ENCODE measurements at regions of chr2 and their contacts with region 1.

Region 1: GRCh38 chr2:10316336-10316735 is 13.6 kb downstream of the HPCAL1 start:
- DNase-seq: no peak
- H3K4me3 ChIP-seq: no peak overlapping the region
- H3K4me3 Mint-ChIP-seq: no peak overlapping the region
- H3K27ac ChIP-seq: no peak overlapping the region
- H3K27ac Mint-ChIP-seq: peak overlapping the region in 4 of 7 donors; percentile 31 to 76 (median 60)
- H3K4me1 ChIP-seq: no peaks in the 10 kb centered on the region
- H3K4me1 Mint-ChIP-seq: peaks cover 17% of the 10 kb centered on the region
- H3K27me3 ChIP-seq: no peaks in the 10 kb centered on the region
- H3K27me3 Mint-ChIP-seq: peaks cover 0 to 2% (median 0%) of the 10 kb centered on the region in 3 donors
- CTCF ChIP-seq: no peak

Region 2: GRCh38 chr2:10278029-10278762 is 38.1 kb before region 1 on chr2:
- intact Hi-C with region 1: no loop called
- DNase-seq: peak; percentile 95 to 97 (median 95)
- H3K4me3 ChIP-seq: peak overlapping the region in 1 of 3 experiments; percentile 29
- H3K4me3 Mint-ChIP-seq: peak overlapping the region; percentile 42 to 76
- H3K27ac ChIP-seq: peak overlapping the region; percentile 91 to 95
- H3K27ac Mint-ChIP-seq: peak overlapping the region; percentile 93 to 97 (median 96)
- H3K4me1 ChIP-seq: peaks cover 43 to 46% of the 10 kb centered on the region in 2 donors
- H3K4me1 Mint-ChIP-seq: peaks cover 47% of the 10 kb centered on the region
- H3K27me3 ChIP-seq: no peaks in the 10 kb centered on the region
- H3K27me3 Mint-ChIP-seq: peaks cover 0 to 3% (median 2%) of the 10 kb centered on the region in 3 donors
- CTCF ChIP-seq: no peak

Region 3: DNA sequence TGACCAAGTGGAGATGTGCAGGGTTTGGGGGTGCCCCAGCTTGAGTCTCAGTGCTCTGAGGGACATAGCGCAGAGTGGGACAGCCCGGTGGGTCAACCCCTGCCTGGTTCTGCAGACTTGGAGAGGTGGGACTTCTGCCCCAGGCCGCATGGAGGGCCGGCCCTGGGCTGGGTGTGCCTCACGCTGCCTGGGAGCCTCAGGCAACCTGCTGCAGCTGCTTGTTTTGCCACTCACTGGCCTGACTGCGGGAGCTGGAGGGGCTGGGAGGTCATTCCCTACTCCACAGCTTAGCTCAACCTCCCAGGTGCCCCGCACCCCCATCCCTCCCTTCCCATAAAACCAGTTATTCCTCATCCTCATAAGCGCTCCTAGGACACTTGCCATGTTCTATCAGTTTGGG is 98.7 kb after region 1 on chr2:
- intact Hi-C with region 1: loop called in 1 of 2 experiments (anchors 5 kb)
- DNase-seq: no peak
- H3K4me3 ChIP-seq: no peak overlapping the region
- H3K4me3 Mint-ChIP-seq: no peak overlapping the region
- H3K27ac ChIP-seq: no peak overlapping the region
- H3K27ac Mint-ChIP-seq: no peak overlapping the region
- H3K4me1 ChIP-seq: peaks cover 15% of the 10 kb centered on the region in 2 donors
- H3K4me1 Mint-ChIP-seq: peaks cover 25% of the 10 kb centered on the region
- H3K27me3 ChIP-seq: no peaks in the 10 kb centered on the region
- H3K27me3 Mint-ChIP-seq: peaks cover 0 to under 1% (median 0%) of the 10 kb centered on the region in 3 donors
- CTCF ChIP-seq: no peak

Region 4: GRCh38 chr2:10777842-10778723 is 461.7 kb after region 1 on chr2:
- intact Hi-C with region 1: no loop called
- DNase-seq: no peak
- H3K4me3 ChIP-seq: no peak overlapping the region
- H3K4me3 Mint-ChIP-seq: no peak overlapping the region
- H3K27ac ChIP-seq: no peak overlapping the region
- H3K27ac Mint-ChIP-seq: no peak overlapping the region
- H3K4me1 ChIP-seq: no peaks in the 10 kb centered on the region
- H3K4me1 Mint-ChIP-seq: no peaks in the 10 kb centered on the region
- H3K27me3 ChIP-seq: no peaks in the 10 kb centered on the region
- H3K27me3 Mint-ChIP-seq: peaks cover 0 to 5% (median 2%) of the 10 kb centered on the region in 3 donors
- CTCF ChIP-seq: no peak

Measured in CD14-positive monocyte (primary cell).